ENCODE measurements at regions of chr16 and their contacts with region 1.

Region 1: GRCh38 chr16:31142109-31143010 is 6.8 kb upstream of the PRSS8 start:
- DNase-seq: peak; percentile 100
- H3K4me3 Mint-ChIP-seq: peak overlapping the region; percentile 69
- H3K27ac Mint-ChIP-seq: peak overlapping the region; percentile 84
- H3K4me1 Mint-ChIP-seq: peaks cover 13% of the 10 kb centered on the region
- H3K27me3 Mint-ChIP-seq: peaks cover 2% of the 10 kb centered on the region

Region 2: DNA sequence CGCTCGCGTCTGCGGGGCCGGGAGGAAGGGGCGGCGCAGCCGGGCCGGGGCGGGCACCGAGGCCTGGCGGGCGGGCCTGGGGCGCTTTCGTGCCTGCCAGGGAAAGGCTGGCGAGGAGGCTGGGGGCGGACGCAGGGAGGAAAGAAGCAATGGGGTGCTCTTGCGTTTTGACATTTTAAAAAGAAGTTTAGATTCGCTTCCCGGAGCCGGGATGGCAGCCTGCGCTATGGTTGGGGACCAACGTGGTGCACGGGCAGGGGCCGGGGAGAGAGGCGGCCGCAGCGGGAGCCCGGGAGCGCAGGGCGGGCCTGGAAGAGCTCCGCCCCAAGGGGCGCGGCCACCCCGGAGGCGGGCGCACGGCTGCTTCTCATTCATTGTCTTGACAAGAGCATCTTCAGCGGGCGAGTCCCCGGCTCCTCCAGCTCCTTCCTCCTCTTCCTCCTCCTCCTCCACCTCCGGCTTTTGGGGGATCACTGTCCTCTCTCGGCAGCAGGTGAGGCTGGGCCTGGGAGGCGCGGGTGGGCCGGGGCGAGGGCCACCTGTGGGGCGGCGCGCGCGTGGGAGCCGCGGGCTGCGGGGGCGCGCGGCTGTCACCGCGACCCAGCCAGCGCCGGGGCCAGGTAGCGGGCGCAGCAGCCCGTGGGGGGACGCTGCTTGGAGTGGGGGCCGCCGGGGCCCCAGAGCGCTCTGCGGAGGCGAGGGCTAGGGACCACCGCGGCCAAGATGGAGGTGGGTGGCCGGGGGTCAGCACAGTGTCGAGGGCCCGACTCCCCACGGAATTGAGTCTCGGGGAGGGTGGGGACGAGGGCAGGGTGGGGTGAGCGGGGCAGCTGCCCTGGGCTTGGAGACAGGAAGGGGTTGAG is 958.9 kb before region 1 on chr16 and contains the start of gene CORO1A:
- CTCF ChIA-PET with region 1: no interaction called
- POLR2A ChIA-PET with region 1: no interaction called
- intact Hi-C with region 1: no loop called
- DNase-seq: peak; percentile 92
- H3K4me3 Mint-ChIP-seq: peak within 1 kb of the TSS; percentile 100
- H3K27ac Mint-ChIP-seq: peak within 1 kb of the TSS; percentile 100
- H3K4me1 Mint-ChIP-seq: peaks cover 24% of the 10 kb centered on the region
- H3K27me3 Mint-ChIP-seq: no peaks in the 10 kb centered on the region
- total RNA-seq, gene CORO1A: 1,027 to 1,051 TPM

Region 3: DNA sequence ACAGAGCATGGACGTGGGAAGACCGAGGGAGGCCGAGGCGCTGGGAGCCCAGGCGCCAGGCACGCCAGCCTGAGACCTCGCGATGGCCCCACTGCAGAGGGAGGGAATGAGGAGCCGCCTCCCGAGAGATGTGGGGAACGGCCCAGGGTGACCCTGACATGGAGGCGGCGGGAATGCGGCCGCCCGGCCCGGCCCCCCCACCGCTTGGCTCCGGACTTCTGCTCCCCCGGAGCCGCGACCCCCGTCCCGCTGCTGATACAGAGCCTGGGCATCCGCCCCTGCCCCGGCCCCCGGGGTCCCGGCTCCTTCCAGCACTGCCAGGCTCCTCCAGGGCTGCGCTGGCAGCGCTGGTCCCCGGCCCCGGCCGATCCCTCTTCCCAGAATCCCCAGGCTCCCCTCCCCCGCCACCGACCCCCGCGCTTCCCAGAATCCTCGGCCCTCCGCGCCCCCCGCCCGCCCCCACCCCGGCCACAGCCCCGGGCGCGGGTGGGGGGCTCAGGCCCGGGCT is 355.9 kb before region 1 on chr16:
- CTCF ChIA-PET with region 1: no interaction called
- POLR2A ChIA-PET with region 1: no interaction called
- intact Hi-C with region 1: no loop called
- DNase-seq: peak; percentile 30
- H3K4me3 Mint-ChIP-seq: peak overlapping the region; percentile 77
- H3K27ac Mint-ChIP-seq: no peak overlapping the region
- H3K4me1 Mint-ChIP-seq: peaks cover 12% of the 10 kb centered on the region
- H3K27me3 Mint-ChIP-seq: peaks cover 4% of the 10 kb centered on the region

Region 4: GRCh38 chr16:30984669-30985400 is 157.5 kb before region 1 on chr16 and contains the start of gene HSD3B7:
- CTCF ChIA-PET with region 1: interaction called, 37 read pairs
- POLR2A ChIA-PET with region 1: no interaction called
- intact Hi-C with region 1: no loop called
- DNase-seq: peak; percentile 88
- H3K4me3 Mint-ChIP-seq: no peak within 1 kb of the TSS
- H3K27ac Mint-ChIP-seq: no peak within 1 kb of the TSS
- H3K4me1 Mint-ChIP-seq: no peaks in the 10 kb centered on the region
- H3K27me3 Mint-ChIP-seq: no peaks in the 10 kb centered on the region
- total RNA-seq, gene HSD3B7: 2.2 TPM

Region 5: GRCh38 chr16:31073968-31074813 is 68.2 kb before region 1 on chr16 and contains the starts of genes ZNF646 and ZNF668:
- CTCF ChIA-PET with region 1: interaction called, 22 read pairs
- POLR2A ChIA-PET with region 1: interaction called, 18 read pairs
- intact Hi-C with region 1: loop called (anchors 1 kb)
- DNase-seq: peak; percentile 99
- H3K4me3 Mint-ChIP-seq: peak within 1 kb of the TSS; percentile 98
- H3K27ac Mint-ChIP-seq: peak within 1 kb of the TSS; percentile 97
- H3K4me1 Mint-ChIP-seq: peaks cover 30% of the 10 kb centered on the region
- H3K27me3 Mint-ChIP-seq: no peaks in the 10 kb centered on the region
- total RNA-seq, gene ZNF646: 18.6 to 19.9 TPM
- total RNA-seq, gene ZNF668: 11.4 to 13.3 TPM

Region 6: GRCh38 chr16:31084616-31085260 is 57.6 kb before region 1 on chr16:
- CTCF ChIA-PET with region 1: no interaction called
- POLR2A ChIA-PET with region 1: no interaction called
- intact Hi-C with region 1: no loop called
- DNase-seq: no peak
- H3K4me3 Mint-ChIP-seq: no peak overlapping the region
- H3K27ac Mint-ChIP-seq: no peak overlapping the region
- H3K4me1 Mint-ChIP-seq: peaks cover 6% of the 10 kb centered on the region
- H3K27me3 Mint-ChIP-seq: no peaks in the 10 kb centered on the region

Region 7: DNA sequence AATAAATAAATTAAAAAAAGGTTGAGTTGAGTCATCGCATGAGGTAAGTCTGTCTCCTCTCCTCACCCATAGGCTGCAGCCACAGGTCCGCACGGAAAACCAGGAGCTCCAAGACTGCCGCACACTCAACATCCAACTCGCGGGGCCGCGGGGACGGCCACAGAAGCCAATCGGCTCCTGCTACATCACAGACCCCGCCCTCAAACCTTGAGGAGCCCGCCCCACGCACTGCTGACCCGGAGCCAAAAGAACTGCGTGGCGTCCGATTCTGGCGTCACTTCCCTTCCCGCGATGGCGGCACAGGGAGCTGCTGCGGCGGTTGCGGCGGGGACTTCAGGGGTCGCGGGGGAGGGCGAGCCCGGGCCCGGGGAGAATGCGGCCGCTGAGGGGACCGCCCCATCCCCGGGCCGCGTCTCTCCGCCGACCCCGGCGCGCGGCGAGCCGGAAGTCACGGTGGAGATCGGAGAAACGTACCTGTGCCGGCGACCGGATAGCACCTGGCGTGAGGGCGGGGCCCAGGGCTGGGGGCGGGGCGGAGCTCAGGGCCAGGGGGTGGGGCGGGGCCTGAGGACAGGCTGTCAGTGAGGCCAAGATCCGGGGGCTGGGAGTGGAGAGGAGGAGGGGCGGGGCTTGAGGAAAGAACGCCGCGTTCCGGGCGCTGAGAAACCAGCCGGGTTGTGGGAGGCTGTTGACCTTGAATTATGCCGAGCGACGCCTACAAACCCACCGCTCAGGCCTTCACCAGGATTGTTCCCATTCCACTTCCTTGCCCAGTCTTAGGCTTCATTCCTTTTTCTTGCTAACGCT is 24.8 kb before region 1 on chr16 and contains the start of gene KAT8:
- CTCF ChIA-PET with region 1: interaction called, 36 read pairs
- POLR2A ChIA-PET with region 1: interaction called, 27 read pairs
- intact Hi-C with region 1: loop called (anchors 1 kb)
- DNase-seq: peak; percentile 99
- H3K4me3 Mint-ChIP-seq: peak within 1 kb of the TSS; percentile 79
- H3K27ac Mint-ChIP-seq: peak within 1 kb of the TSS; percentile 70
- H3K4me1 Mint-ChIP-seq: peaks cover 20% of the 10 kb centered on the region
- H3K27me3 Mint-ChIP-seq: no peaks in the 10 kb centered on the region
- total RNA-seq, gene KAT8: 48.8 to 49.6 TPM

Region 8: DNA sequence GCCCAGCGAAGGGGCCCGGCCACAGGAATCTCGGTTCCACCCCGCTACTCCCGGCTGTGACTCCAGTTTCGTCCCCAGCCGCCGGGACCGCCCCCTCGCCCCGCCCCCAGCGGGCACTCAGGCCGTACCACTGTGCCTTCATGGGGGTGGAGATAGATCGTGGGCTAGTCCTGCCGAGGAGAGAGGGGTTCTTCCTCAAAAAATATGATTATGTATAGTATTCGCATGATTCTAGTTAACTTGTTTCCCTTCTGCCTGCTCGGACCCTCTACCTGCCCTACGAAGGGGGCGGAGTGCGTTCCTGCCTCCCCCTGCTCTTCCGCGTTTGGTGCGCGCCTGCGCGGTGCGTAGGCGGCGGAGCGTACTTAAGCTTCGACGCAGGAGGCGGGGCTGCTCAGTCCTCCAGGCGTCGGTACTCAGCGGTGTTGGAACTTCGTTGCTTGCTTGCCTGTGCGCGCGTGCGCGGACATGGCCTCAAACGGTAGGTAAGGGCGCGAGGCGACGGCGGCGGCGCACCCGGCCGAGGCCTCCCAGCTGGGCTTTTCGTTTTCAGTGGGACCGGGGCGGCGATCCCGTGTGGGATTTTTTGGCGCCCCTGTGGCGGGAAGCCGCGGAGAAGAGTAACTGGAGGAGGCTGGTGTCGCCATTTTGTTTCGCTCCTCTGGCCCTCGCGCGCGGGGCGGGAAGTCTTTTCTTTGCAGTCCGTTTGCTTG is 37.5 kb after region 1 on chr16 and contains the start of gene FUS:
- CTCF ChIA-PET with region 1: interaction called, 18 read pairs
- POLR2A ChIA-PET with region 1: interaction called, 44 read pairs
- intact Hi-C with region 1: loop called (anchors 1 kb)
- DNase-seq: peak; percentile 93
- H3K4me3 Mint-ChIP-seq: peak within 1 kb of the TSS; percentile 86
- H3K27ac Mint-ChIP-seq: peak within 1 kb of the TSS; percentile 99
- H3K4me1 Mint-ChIP-seq: peaks cover 44% of the 10 kb centered on the region
- H3K27me3 Mint-ChIP-seq: peaks cover 4% of the 10 kb centered on the region
- total RNA-seq, gene FUS: 459 to 489 TPM

Region 9: GRCh38 chr16:31458844-31459721 is 316.7 kb after region 1 on chr16 and contains the start of gene ARMC5:
- CTCF ChIA-PET with region 1: interaction called, 11 read pairs
- POLR2A ChIA-PET with region 1: interaction called, 3 read pairs
- intact Hi-C with region 1: loop called (anchors 1 kb)
- DNase-seq: peak; percentile 98
- H3K4me3 Mint-ChIP-seq: peak within 1 kb of the TSS; percentile 87
- H3K27ac Mint-ChIP-seq: peak within 1 kb of the TSS; percentile 94
- H3K4me1 Mint-ChIP-seq: peaks cover 48% of the 10 kb centered on the region
- H3K27me3 Mint-ChIP-seq: no peaks in the 10 kb centered on the region
- total RNA-seq, gene ARMC5: 5.5 to 6.4 TPM